Sigmoid colon (tissue), 7 donors: ENCODE measurements at regions of chrX and their contacts with region 1.

Region 1: DNA sequence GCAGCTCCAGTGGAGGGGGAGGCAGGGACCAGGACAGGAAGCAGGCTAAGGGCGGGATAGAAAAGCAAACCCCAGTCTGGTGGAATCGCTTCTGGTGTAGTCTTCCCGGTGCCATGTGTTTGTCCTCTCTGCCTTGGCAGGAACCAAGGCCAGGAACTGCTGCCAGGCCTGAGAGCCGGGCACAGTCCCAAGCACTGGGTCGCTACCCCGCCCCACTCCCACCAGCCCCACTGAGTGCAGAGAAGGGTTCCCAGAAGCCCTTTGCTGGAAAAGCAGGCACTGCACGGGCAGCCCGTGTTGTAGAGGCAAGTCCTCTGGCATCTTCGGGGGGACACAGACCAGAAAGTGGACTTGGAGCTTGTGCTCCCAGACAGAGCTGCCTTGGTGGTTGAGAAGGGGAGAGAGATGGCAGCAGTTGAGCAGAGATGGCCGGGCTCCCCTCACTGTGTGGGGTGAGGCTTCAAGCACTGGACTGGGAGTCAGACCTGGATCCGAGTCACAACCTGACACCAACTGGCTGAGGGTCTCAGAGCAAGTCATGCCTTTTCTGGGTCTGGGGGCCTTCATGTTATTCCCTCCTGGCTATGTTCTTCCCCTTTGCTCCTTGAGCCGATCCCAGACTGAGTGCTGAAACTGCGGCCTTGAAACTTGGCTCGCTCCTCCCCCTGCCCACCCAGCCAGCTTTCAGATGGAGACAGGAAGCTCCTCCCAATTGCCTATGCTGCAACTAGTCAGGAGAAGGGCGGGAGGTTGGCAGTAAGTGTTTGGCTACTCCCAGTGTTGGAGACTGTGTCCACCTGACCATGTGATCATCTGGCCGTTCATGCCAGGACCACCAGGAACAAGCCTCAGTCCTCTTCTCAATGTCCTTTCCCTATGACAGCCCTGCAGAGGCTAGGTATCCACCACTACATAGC is 59.7 kb upstream of the MTM1 start:
- DNase-seq: peak; percentile 87
- H3K4me3 ChIP-seq: peak overlapping the region in 2 of 4 donors; percentile 14 to 19
- H3K27ac ChIP-seq: peak overlapping the region; percentile 67 to 79 (median 72)
- H3K4me1 ChIP-seq: peaks cover 0 to 9% (median 8%) of the 10 kb centered on the region in 4 donors
- H3K27me3 ChIP-seq: no peaks in the 10 kb centered on the region
- CTCF ChIP-seq: no peak
- EP300 ChIP-seq: no peak
- POLR2A ChIP-seq: no peak

Region 2: GRCh38 chrX:150547375-150548115 is 38.8 kb after region 1 on chrX:
- intact Hi-C with region 1: loop called (anchors 5 kb)
- DNase-seq: peak; percentile 85
- H3K4me3 ChIP-seq: peak overlapping the region; percentile 23 to 47 (median 40)
- H3K27ac ChIP-seq: peak overlapping the region; percentile 76 to 84 (median 83)
- H3K4me1 ChIP-seq: peaks cover 0 to 19% (median 8%) of the 10 kb centered on the region in 4 donors
- H3K27me3 ChIP-seq: no peaks in the 10 kb centered on the region
- CTCF ChIP-seq: no peak
- EP300 ChIP-seq: no peak
- POLR2A ChIP-seq: no peak